ENCODE measurements at regions of chr18 and their contacts with region 1.

Region 1: GRCh38 chr18:61006687-61007224 is 326.5 kb upstream of the CDH20 start:
- DNase-seq: no peak
- H3K4me3 Mint-ChIP-seq: no peak overlapping the region
- H3K27ac Mint-ChIP-seq: no peak overlapping the region
- H3K4me1 Mint-ChIP-seq: no peaks in the 10 kb centered on the region
- H3K27me3 Mint-ChIP-seq: no peaks in the 10 kb centered on the region

Region 2: DNA sequence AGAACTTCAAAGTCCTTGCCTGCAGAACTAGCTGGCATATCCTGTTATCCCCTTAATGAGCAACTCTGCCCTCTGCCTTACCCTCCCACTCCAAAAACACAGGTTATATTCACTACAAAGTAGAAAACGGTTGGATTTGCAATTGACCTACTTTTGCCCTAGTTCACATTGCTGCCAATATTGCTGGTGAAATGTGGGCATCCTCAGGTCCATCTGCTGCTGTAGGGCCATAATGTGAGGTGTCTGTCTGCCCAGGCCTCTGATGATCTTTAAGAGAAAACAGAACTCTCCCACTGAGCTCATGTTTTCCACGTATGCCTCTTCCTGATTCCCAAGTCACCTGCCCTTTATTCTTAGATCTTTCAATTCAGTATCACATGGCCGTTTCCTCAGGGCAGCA is 32.5 kb after region 1 on chr18:
- intact Hi-C with region 1: loop called (anchors 2 kb)
- DNase-seq: no peak
- H3K4me3 Mint-ChIP-seq: no peak overlapping the region
- H3K27ac Mint-ChIP-seq: no peak overlapping the region
- H3K4me1 Mint-ChIP-seq: no peaks in the 10 kb centered on the region
- H3K27me3 Mint-ChIP-seq: no peaks in the 10 kb centered on the region